IMR-90 (cell line): ENCODE measurements at regions of chr14 and their contacts with region 1.

Region 1: GRCh38 chr14:57232006-57232405 is 36.7 kb downstream of the EXOC5 start:
- DNase-seq: no peak
- ATAC-seq: no peak
- H3K4me3 ChIP-seq: no peak overlapping the region
- H3K27ac ChIP-seq: no peak overlapping the region
- H3K4me1 ChIP-seq: no peaks in the 10 kb centered on the region
- H3K27me3 ChIP-seq: no peaks in the 10 kb centered on the region
- CTCF ChIP-seq: no peak
- POLR2A ChIP-seq: no peak
- RAD21 ChIP-seq: no peak

Region 2: DNA sequence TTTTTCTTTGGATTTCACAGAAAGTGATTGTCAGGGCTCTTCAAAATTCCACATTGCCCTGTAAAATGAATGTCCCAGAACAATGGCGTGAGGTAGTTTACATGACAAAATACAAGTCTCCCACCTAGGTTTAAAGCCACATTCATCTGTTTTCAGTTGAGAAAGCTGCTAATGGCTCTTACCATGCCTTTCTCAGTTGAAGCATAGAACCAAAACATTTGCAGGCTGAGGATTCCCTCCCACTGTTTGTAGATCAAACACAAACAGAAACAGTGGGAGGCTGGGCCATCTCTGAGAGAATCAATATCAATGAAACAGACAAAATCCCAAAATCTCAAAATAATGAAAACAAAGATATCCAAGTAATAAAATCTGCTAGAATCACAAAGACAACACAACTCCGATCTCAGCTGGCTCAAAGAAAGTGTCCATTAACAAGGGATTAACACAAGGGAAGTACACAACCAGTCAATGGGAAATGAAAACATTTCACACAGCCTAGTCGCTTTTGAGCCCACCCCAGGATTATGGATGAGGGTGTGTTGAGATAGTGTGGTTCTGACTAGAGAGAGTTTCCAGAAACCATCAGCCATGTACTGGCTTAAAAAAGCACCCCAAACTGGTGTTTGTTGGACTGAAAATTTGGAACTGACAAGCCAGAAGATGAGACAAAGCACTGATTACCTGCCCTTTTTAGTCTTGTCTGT is 706.9 kb before region 1 on chr14:
- CTCF ChIA-PET with region 1: no interaction called
- POLR2A ChIA-PET with region 1: no interaction called
- dilution Hi-C with region 1: no loop called
- in situ Hi-C with region 1: no loop called
- intact Hi-C with region 1: no loop called
- DNase-seq: no peak
- ATAC-seq: no peak
- H3K4me3 ChIP-seq: no peak overlapping the region
- H3K27ac ChIP-seq: no peak overlapping the region
- H3K4me1 ChIP-seq: no peaks in the 10 kb centered on the region
- H3K27me3 ChIP-seq: peaks cover 10% of the 10 kb centered on the region
- CTCF ChIP-seq: no peak
- POLR2A ChIP-seq: no peak
- RAD21 ChIP-seq: no peak

Region 3: GRCh38 chr14:56797569-56798446 is 434.2 kb before region 1 on chr14:
- CTCF ChIA-PET with region 1: no interaction called
- POLR2A ChIA-PET with region 1: no interaction called
- dilution Hi-C with region 1: no loop called
- in situ Hi-C with region 1: no loop called
- intact Hi-C with region 1: no loop called
- DNase-seq: no peak
- ATAC-seq: no peak
- H3K4me3 ChIP-seq: no peak overlapping the region
- H3K27ac ChIP-seq: no peak overlapping the region
- H3K4me1 ChIP-seq: no peaks in the 10 kb centered on the region
- H3K27me3 ChIP-seq: peaks cover 73% of the 10 kb centered on the region
- CTCF ChIP-seq: no peak
- POLR2A ChIP-seq: no peak
- RAD21 ChIP-seq: no peak

Region 4: GRCh38 chr14:57221931-57222330 is 10.1 kb before region 1 on chr14:
- CTCF ChIA-PET with region 1: no interaction called
- POLR2A ChIA-PET with region 1: no interaction called
- dilution Hi-C with region 1: no loop called
- in situ Hi-C with region 1: no loop called
- intact Hi-C with region 1: loop called (anchors 2 kb)
- DNase-seq: no peak
- ATAC-seq: no peak
- H3K4me3 ChIP-seq: no peak overlapping the region
- H3K27ac ChIP-seq: no peak overlapping the region
- H3K4me1 ChIP-seq: no peaks in the 10 kb centered on the region
- H3K27me3 ChIP-seq: no peaks in the 10 kb centered on the region
- CTCF ChIP-seq: no peak
- POLR2A ChIP-seq: no peak
- RAD21 ChIP-seq: no peak